Endothelial cell of umbilical vein (primary cell): ENCODE measurements at regions of chr12 and their contacts with region 1.

Region 1: DNA sequence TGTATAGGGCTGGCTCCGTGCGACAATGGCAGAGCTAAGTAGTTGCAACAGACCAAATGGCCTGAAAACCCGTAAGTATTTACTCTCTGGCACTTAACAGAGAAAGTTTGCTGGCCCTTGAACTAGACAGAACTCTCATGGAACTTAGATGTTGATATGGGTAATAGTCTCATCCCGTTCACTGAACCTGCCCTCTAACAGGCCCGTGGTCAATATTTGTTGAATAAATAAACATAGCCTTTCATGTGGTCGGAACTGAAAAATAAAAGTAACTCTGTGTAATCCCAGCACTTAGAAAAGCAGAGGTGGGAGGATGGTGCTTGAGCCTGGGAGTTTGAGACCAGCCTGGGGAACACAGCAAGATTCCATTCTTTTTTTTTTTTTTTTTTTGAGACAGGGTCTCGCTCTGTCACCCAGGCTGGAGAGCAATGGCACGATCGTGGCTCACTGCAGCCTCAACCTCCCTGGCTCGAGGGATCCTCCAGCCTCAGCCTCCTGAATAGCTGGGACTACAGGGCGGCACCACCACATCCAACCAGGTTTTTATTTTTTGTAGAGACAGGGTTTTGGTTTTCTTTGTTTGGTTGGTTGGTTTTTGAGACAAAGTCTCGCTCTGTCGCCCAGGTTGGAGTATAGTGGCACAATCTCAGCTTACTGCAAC is 29.7 kb downstream of the KDM2B start:
- DNase-seq: no peak
- H3K4me3 ChIP-seq: no peak overlapping the region
- H3K27ac ChIP-seq: no peak overlapping the region
- H3K4me1 ChIP-seq: no peaks in the 10 kb centered on the region
- H3K27me3 ChIP-seq: no peaks in the 10 kb centered on the region
- CTCF ChIP-seq: no peak
- POLR2A ChIP-seq: no peak

Region 2: DNA sequence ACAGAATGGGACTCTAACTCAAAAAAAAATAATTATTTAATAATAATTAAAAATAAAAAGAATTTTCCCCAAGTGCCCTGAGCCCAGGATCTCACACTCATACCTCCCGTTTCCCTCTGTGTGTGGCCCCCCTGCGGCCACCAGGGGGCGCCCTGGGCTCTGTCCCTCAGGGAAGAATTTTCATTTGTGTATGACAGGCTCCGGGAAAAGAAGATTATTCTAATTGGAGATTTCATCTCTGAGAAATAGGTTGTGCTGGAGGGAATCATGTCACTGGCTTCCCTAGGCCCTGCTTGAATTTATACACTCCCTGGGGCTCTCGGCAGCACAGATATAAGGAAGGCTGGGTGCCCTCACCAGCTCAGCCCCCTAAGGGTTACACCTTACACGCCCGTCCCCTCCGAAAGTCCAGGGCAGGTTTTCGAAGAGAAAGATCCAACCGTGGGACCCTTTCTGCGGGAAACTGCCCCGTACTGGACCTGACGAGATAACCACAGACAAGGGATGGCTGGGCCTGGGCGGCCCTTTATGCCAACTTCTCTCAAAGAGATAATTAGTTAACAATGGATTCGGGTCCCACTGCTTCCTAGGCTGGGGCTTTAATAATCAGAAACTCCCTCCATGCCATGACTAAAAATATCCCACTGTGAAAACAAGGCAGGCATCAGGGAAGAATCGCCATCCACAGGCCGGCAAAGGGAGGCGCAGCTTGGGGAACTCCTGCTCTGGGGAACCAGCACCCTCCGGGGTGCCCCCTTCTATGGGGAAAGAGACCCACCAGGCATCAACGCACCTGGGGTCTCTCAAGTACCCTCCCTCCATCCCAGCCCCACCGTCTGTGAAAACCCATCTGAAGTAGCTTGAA is 50.9 kb before region 1 on chr12:
- CTCF ChIA-PET with region 1: interaction called, 21 read pairs
- POLR2A ChIA-PET with region 1: no interaction called
- dilution Hi-C with region 1: no loop called
- intact Hi-C with region 1: loop called (anchors 5 kb)
- DNase-seq: peak; percentile 71
- H3K4me3 ChIP-seq: peak overlapping the region in 1 of 3 experiments; percentile 34
- H3K27ac ChIP-seq: no peak overlapping the region
- H3K4me1 ChIP-seq: peaks cover 3% of the 10 kb centered on the region
- H3K27me3 ChIP-seq: no peaks in the 10 kb centered on the region
- CTCF ChIP-seq: peak; percentile 91 to 95
- POLR2A ChIP-seq: no peak

Region 3: DNA sequence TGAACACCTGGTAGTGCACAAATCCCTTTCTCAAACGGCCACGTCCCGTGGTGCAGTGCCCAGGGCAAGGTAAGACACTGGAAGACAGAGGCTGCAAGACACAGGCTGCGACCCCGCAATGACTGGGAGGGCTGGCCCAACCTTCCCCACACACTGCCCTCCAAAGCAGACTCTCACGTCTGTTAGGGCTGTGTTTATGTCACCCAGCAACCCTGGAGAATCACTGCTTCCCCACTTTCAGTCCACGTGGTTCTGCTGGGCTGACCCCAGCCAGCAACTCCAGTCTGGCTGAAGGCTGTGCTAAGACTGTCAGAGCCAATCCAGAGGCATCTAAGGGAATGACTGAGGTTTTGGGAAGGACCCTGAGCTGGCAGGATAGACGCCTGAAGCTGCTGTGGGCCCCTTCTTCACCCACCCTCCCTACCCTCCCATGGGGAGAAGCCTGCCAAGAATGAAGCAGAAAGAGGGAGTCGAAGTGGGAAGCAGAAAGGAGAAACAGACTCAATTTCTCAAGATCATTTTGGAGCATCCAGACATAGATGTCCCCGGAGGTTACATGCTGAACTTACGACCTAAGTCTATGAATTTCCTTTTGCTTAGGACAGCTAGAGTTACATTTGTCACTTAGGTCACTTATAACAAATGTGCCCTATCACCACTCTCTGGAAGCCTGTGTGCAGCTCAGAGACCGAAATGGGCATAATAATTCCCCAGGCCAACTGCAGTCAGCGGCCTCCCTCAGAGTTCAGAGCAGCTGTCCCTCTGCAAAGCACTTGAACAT is 18.1 kb after region 1 on chr12:
- CTCF ChIA-PET with region 1: interaction called, 24 read pairs
- POLR2A ChIA-PET with region 1: no interaction called
- dilution Hi-C with region 1: no loop called
- intact Hi-C with region 1: no loop called
- DNase-seq: no peak
- H3K4me3 ChIP-seq: no peak overlapping the region
- H3K27ac ChIP-seq: no peak overlapping the region
- H3K4me1 ChIP-seq: no peaks in the 10 kb centered on the region
- H3K27me3 ChIP-seq: no peaks in the 10 kb centered on the region
- CTCF ChIP-seq: no peak
- POLR2A ChIP-seq: no peak

Region 4: DNA sequence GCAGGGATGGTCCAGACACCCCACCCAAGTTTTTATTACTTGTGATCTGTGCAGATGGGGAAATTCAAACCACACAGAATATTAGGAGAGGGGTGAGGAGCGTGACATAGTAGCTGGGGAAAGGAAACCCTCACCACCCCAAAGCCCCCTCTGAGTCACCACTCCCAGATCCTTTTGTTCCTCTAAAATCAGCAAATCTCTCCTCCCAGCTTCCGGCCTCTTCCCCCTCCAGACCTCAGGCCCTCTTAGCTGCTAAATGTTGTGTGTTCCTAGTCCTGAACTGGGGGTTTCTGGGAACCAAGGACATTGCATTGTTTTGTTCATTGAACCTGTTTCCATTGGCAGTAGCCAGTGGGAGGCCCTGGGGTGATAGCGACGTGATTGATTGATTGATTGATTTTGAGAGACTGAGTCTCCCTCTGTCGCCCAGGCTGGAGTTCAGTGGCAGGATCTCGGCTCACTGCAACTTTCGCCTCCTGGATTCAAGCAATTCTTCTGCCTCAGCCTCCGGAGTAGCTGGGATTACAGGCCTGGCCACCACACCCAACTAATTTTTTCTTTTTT is 69.3 kb after region 1 on chr12:
- CTCF ChIA-PET with region 1: interaction called, 108 read pairs
- POLR2A ChIA-PET with region 1: no interaction called
- dilution Hi-C with region 1: no loop called
- intact Hi-C with region 1: loop called (anchors 1 kb)
- DNase-seq: no peak
- H3K4me3 ChIP-seq: no peak overlapping the region
- H3K27ac ChIP-seq: no peak overlapping the region
- H3K4me1 ChIP-seq: peaks cover 4% of the 10 kb centered on the region
- H3K27me3 ChIP-seq: no peaks in the 10 kb centered on the region
- CTCF ChIP-seq: no peak
- POLR2A ChIP-seq: no peak

Region 5: GRCh38 chr12:121637231-121637914 is 86.3 kb after region 1 on chr12:
- CTCF ChIA-PET with region 1: interaction called, 25 read pairs
- POLR2A ChIA-PET with region 1: no interaction called
- dilution Hi-C with region 1: no loop called
- intact Hi-C with region 1: no loop called
- DNase-seq: no peak
- H3K4me3 ChIP-seq: no peak overlapping the region
- H3K27ac ChIP-seq: no peak overlapping the region
- H3K4me1 ChIP-seq: peaks cover 2% of the 10 kb centered on the region
- H3K27me3 ChIP-seq: no peaks in the 10 kb centered on the region
- CTCF ChIP-seq: no peak
- POLR2A ChIP-seq: no peak

Region 6: DNA sequence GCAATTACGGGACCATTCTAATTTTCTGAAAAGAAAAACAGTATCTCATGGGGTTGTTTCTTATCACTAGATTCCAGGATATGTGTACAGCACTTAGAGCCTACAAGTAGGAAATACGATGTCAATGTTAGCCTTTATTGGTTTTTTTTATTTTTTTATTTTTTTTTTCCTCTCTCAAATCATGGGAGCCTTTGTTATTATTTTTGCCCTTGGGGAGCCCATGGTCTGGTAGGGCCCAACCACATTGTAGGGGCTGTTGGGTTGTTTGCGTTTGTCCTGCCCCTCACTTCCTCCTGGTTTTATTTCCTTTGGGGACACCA is 112.5 kb after region 1 on chr12:
- CTCF ChIA-PET with region 1: interaction called, 671 read pairs
- POLR2A ChIA-PET with region 1: interaction called, 21 read pairs
- dilution Hi-C with region 1: no loop called
- intact Hi-C with region 1: loop called (anchors 1 kb)
- DNase-seq: no peak
- H3K4me3 ChIP-seq: no peak overlapping the region
- H3K27ac ChIP-seq: peak overlapping the region; percentile 48
- H3K4me1 ChIP-seq: peaks cover 19% of the 10 kb centered on the region
- H3K27me3 ChIP-seq: no peaks in the 10 kb centered on the region
- CTCF ChIP-seq: no peak
- POLR2A ChIP-seq: no peak